Kidney (tissue), 22 donors: ENCODE measurements at regions of chr21 and their contacts with region 1.

Region 1: DNA sequence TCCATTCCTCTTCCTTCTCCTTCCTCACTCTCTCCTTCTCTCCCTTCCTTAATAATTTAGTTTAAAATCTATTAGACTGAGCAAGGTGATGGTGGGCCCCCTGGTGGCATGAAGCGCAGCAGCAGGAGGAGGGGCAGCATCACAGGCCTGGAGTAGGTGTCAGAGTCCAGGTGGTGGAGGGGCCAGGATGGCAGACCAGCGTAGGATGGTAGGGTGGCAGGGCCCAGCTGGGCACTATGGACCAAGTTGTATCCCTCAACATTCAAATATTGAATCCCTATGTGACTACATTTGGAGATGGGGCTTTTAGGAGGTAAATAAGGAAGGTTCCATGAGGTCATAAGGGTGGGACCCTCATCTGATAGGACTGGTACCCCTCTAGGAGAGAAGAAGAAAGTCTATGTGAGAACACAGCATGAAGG is 61.0 kb downstream of the WDR4 start:
- DNase-seq: peak in 4 of 5 donors; percentile 42 to 82 (median 68)
- H3K4me3 ChIP-seq: no peak overlapping the region
- H3K27ac ChIP-seq: no peak overlapping the region
- H3K4me1 ChIP-seq: no peaks in the 10 kb centered on the region
- H3K27me3 ChIP-seq: no peaks in the 10 kb centered on the region
- CTCF ChIP-seq: peak; percentile 81

Region 2: GRCh38 chr21:42537106-42537742 is 281.1 kb before region 1 on chr21:
- intact Hi-C with region 1: no loop called
- DNase-seq: peak in 1 of 5 donors; percentile 23
- H3K4me3 ChIP-seq: no peak overlapping the region
- H3K27ac ChIP-seq: no peak overlapping the region
- H3K4me1 ChIP-seq: peaks cover 0 to 21% (median 9%) of the 10 kb centered on the region in 3 donors
- H3K27me3 ChIP-seq: no peaks in the 10 kb centered on the region
- CTCF ChIP-seq: peak; percentile 4

Region 3: GRCh38 chr21:42593007-42593806 is 225.1 kb before region 1 on chr21:
- intact Hi-C with region 1: loop called (anchors 10 kb)
- DNase-seq: peak; percentile 87 to 91 (median 89)
- H3K4me3 ChIP-seq: no peak overlapping the region
- H3K27ac ChIP-seq: peak overlapping the region in 1 of 2 donors; percentile 51
- H3K4me1 ChIP-seq: peaks cover 0 to 8% (median 0%) of the 10 kb centered on the region in 3 donors
- H3K27me3 ChIP-seq: no peaks in the 10 kb centered on the region
- CTCF ChIP-seq: peak; percentile 77